Mammary epithelial cell (primary cell): ENCODE measurements at regions of chr7 and their contacts with region 1.

Region 1: GRCh38 chr7:141014524-141015395 is at the start of gene MRPS33:
- DNase-seq: peak; percentile 92
- H3K4me3 ChIP-seq: peak within 1 kb of the TSS; percentile 69 to 90 (median 88)
- H3K27ac ChIP-seq: peak within 1 kb of the TSS; percentile 97
- H3K4me1 ChIP-seq: peaks cover 10% of the 10 kb centered on the region
- H3K27me3 ChIP-seq: no peaks in the 10 kb centered on the region
- CTCF ChIP-seq: peak; percentile 43 to 68
- total RNA-seq, gene MRPS33: 17.8 to 67.7 TPM

Region 2: GRCh38 chr7:140517546-140518369 is 497.0 kb before region 1 on chr7:
- CTCF ChIA-PET with region 1: no interaction called
- dilution Hi-C with region 1: no loop called
- in situ Hi-C with region 1: no loop called
- intact Hi-C with region 1: loop called (anchors 10 kb)
- DNase-seq: peak; percentile 76
- H3K4me3 ChIP-seq: no peak overlapping the region
- H3K27ac ChIP-seq: no peak overlapping the region
- H3K4me1 ChIP-seq: no peaks in the 10 kb centered on the region
- H3K27me3 ChIP-seq: no peaks in the 10 kb centered on the region
- CTCF ChIP-seq: peak; percentile 92 to 94

Region 3: GRCh38 chr7:140673063-140673773 is 341.5 kb before region 1 on chr7:
- CTCF ChIA-PET with region 1: no interaction called
- dilution Hi-C with region 1: no loop called
- in situ Hi-C with region 1: loop called in 1 of 2 experiments (anchors 10 kb)
- intact Hi-C with region 1: loop called (anchors 1 kb)
- DNase-seq: peak; percentile 56
- H3K4me3 ChIP-seq: peak overlapping the region; percentile 53 to 69 (median 64)
- H3K27ac ChIP-seq: no peak overlapping the region
- H3K4me1 ChIP-seq: peaks cover 26% of the 10 kb centered on the region
- H3K27me3 ChIP-seq: no peaks in the 10 kb centered on the region
- CTCF ChIP-seq: peak in 1 of 2 donors; percentile 3

Region 4: GRCh38 chr7:140924019-140924820 is 90.5 kb before region 1 on chr7:
- CTCF ChIA-PET with region 1: interaction called, 4 read pairs
- dilution Hi-C with region 1: no loop called
- in situ Hi-C with region 1: no loop called
- intact Hi-C with region 1: loop called (anchors 5 kb)
- DNase-seq: peak; percentile 60
- H3K4me3 ChIP-seq: peak overlapping the region; percentile 75 to 89 (median 83)
- H3K27ac ChIP-seq: peak overlapping the region; percentile 90
- H3K4me1 ChIP-seq: peaks cover 4% of the 10 kb centered on the region
- H3K27me3 ChIP-seq: no peaks in the 10 kb centered on the region
- CTCF ChIP-seq: peak in 1 of 2 donors; percentile 44

Region 5: GRCh38 chr7:141452911-141453310 is 438.2 kb after region 1 on chr7:
- CTCF ChIA-PET with region 1: no interaction called
- dilution Hi-C with region 1: no loop called
- in situ Hi-C with region 1: no loop called
- intact Hi-C with region 1: no loop called
- DNase-seq: no peak
- H3K4me3 ChIP-seq: no peak overlapping the region
- H3K27ac ChIP-seq: no peak overlapping the region
- H3K4me1 ChIP-seq: peaks cover 8% of the 10 kb centered on the region
- H3K27me3 ChIP-seq: no peaks in the 10 kb centered on the region
- CTCF ChIP-seq: no peak

Region 6: DNA sequence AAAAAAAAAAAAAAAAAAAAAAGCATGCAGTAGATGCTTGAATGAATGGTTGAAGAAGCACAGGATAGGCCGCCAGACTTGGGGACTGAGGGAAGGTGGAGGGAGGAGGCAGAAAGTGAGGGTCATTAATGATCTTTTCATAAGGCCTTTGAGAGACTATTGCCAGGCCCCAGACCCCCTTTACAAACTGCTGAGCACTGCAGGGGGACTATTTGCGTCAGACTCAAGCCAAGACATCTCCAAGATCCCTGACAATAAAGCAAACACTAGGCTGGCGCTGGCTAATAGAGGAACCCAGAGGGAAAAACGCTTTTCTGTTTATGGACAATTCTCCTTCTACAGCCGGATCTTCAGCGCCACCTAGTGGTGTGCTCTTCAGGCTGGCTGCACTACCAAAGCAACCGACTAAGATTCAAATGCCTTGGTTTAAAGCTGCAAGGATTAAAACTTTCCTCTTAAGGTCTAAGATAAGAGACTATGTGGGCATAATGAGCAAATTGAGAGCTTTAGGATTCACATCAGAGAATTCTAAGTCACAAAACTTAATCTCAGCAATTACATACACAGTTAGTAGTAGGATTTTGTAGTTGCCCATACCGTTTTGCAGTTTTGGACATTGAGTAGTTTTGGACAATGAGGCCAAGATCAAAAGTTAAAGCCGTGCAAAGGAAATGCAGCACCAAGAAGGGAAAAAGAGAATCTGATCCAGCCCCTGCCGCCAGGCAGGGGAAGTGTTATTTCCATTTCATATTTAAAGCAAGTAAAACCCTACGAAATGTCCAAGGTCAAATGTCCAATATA is 518.6 kb after region 1 on chr7:
- CTCF ChIA-PET with region 1: interaction called, 5 read pairs
- dilution Hi-C with region 1: no loop called
- in situ Hi-C with region 1: no loop called
- intact Hi-C with region 1: loop called (anchors 1 kb)
- DNase-seq: peak; percentile 38
- H3K4me3 ChIP-seq: no peak overlapping the region
- H3K27ac ChIP-seq: no peak overlapping the region
- H3K4me1 ChIP-seq: no peaks in the 10 kb centered on the region
- H3K27me3 ChIP-seq: no peaks in the 10 kb centered on the region
- CTCF ChIP-seq: peak; percentile 94 to 99

Region 7: DNA sequence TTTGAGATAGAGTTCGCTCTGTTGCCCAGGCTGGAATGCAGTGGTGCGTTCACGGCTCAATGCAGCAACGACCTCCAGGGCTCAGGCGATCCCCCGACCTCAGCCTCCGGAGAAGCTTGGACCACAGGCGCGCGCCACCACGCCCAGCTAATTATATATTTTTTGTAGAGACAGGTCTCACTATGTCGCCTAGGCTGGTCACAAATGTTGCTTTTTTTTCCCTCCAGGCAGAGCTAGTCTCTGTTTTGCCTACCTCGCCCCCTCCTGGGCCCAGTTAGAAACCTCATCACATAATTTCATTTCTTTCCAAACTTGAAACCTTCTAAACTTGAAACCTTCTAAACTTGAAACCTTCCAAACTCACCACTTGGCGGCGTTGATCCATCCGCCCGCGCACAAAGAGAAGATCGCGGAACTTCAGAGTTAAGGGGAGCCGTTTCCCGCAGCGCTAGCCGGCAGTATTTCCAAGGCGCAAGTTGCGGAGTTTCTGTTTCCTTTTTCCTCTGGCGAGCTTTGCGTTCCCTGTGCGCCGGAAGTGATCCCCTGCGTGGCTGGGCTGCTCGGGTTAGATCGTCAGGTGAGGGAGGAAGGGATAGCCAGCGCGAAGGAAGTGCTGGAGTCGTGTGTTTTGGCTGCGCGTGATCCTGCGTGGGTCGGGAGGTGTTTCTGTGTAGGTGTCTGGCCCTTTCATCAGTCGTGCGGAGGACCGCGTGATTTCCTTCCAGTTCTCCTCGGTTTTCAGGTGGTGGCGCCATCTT is 723.3 kb after region 1 on chr7 and contains the start of gene SSBP1:
- CTCF ChIA-PET with region 1: no interaction called
- dilution Hi-C with region 1: no loop called
- in situ Hi-C with region 1: no loop called
- intact Hi-C with region 1: loop called (anchors 10 kb)
- DNase-seq: peak; percentile 94
- H3K4me3 ChIP-seq: peak within 1 kb of the TSS; percentile 95 to 98 (median 97)
- H3K27ac ChIP-seq: peak within 1 kb of the TSS; percentile 87
- H3K4me1 ChIP-seq: peaks cover 11% of the 10 kb centered on the region
- H3K27me3 ChIP-seq: no peaks in the 10 kb centered on the region
- CTCF ChIP-seq: peak; percentile 75 to 86
- total RNA-seq, gene SSBP1: 81.0 to 163 TPM